Cardiac septum (tissue), 1 donor: ENCODE measurements at regions of chr12 and their contacts with region 1.

Region 1: GRCh38 chr12:93742110-93742934 is 65.1 kb downstream of the CRADD start:
- DNase-seq: peak; percentile 87

Region 2: DNA sequence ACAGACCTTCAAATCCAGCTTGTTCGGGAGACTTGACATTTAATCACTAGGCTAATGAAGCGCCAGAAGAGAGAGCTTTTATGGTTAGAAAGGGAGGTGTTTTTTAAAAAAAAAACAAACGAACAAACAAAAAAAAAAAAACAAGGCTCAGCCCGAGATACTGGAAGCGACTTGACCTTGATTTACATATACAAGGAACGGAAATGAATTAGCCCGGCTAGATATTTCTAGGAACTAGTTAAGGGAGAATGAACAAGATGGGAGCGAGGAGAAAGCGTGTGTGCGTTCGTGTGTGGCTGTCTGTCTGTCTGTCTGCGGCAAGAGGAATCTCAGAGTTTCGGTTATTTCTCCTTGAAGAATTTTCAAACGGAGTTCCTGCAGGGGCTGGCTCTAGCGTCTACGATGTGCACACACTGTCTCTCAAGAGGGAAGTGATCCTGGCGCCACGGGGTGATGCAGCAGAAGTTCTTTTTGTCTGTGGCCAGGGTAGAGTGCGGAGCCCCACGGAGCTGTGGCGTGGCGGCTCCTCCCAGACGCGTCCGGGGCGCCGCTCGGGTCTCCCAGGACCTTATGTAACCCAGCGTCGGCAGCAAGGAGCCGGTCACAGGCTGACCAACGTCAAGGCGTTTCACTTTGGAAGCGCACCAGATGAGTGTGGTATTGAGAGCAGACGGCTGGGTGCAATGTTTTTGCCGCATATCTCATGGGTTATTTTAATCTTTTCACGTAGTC is 151.0 kb before region 1 on chr12:
- intact Hi-C with region 1: loop called (anchors 1 kb)
- DNase-seq: peak; percentile 91

Region 3: GRCh38 chr12:93778306-93778705 is 36.0 kb after region 1 on chr12:
- intact Hi-C with region 1: loop called (anchors 2 kb)
- DNase-seq: no peak